Posterior vena cava (tissue), 2 donors: ENCODE measurements at regions of chr11 and their contacts with region 1.

Region 1: DNA sequence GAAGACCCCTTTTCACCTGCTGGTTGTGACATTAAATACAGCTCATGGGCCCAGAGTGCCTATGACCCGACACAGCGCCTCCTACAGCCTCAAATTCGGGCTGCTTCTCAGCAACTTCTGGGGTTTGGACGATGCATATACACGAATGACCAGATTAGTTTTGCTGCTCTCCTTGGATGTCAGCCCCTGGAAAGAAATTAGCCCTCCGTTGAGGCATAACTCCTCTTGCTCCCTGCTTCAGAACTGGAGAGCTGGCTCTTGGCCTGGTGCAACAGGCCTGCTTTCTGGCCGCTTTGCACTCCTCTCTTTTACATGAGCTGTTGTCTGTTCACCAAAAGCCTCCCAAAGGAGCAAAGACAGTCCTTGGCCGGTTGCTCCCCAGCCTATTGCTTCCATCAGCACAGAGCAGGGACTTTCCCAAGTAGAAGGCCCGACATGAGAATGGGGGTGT is 3.3 kb downstream of the TECTA start:
- DNase-seq: no peak

Region 2: DNA sequence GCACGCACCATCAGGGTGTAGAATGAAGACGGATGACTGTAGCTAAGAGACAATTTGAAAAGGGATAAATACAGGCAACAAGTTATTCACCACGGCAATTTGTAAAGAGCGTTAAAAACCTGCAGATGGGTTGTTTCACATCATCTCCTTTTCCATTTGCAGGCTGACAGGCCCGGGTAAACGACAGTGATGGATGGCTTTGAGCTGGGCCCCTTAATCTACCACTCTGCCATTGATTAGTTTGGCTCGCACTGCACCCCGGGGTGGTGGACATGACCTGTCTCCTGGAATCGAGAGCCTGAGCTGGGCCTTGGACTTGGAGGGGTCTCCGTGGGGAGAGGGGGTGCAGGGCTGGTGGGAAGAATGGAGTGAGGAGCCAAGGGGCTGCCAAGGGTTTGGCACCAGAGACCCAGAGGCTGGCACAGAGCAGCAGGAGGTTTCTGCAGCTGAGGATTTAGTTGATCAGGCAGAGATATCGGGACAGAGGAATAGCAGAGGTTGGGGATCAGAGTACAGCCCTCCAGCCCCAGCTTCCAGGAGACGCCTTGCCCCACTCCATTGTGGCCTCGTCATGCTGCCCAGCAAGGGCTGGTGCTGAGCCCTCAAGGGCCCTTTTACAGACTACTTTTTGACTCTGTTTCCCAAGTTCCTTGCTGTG is 1264.7 kb before region 1 on chr11:
- intact Hi-C with region 1: loop called in 1 of 2 experiments (anchors 5 kb)
- DNase-seq: peak; percentile 49

Region 3: DNA sequence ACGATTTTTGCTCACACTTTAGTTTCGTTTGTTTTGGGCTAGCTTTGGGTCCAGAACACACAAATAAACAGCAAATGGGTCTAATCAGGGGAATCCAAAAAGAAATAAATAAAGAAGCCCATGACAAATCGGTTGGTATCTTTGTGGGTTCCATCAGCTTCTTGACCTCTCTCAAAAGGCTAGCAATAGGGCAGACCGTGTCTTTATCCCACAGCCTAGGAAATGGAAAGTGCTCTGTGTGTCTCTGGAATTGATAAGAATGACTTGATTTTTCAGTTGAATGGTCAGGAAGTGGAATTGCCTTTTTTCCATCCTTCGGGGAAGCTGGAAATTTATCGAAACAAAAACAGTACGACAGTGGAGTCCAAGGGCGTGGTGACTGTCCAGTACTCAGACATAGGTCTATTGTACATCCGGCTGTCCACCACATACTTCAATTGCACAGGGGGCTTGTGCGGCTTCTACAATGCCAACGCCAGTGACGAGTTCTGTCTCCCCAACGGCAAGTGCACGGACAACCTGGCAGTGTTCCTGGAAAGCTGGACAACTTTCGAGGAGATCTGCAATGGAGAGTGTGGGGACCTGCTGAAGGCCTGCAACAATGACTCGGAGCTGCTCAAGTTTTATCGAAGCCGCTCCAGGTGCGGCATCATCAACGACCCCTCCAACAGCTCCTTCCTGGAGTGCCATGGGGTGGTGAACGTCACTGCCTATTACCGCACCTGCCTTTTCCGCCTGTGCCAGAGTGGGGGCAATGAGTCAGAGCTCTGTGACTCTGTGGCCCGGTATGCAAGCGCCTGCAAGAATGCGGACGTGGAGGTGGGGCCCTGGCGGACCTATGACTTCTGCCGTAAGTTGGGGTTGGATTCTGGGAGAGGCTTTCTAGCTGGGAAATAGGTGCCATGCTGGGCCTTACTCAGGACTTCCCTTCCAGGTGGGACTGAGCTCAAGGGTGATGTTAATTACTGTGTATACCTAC is 25.3 kb after region 1 on chr11:
- intact Hi-C with region 1: loop called in 1 of 2 experiments (anchors 2 kb)
- DNase-seq: no peak